HEK293 (cell line): ENCODE measurements at regions of chr3 and their contacts with region 1.

Region 1: DNA sequence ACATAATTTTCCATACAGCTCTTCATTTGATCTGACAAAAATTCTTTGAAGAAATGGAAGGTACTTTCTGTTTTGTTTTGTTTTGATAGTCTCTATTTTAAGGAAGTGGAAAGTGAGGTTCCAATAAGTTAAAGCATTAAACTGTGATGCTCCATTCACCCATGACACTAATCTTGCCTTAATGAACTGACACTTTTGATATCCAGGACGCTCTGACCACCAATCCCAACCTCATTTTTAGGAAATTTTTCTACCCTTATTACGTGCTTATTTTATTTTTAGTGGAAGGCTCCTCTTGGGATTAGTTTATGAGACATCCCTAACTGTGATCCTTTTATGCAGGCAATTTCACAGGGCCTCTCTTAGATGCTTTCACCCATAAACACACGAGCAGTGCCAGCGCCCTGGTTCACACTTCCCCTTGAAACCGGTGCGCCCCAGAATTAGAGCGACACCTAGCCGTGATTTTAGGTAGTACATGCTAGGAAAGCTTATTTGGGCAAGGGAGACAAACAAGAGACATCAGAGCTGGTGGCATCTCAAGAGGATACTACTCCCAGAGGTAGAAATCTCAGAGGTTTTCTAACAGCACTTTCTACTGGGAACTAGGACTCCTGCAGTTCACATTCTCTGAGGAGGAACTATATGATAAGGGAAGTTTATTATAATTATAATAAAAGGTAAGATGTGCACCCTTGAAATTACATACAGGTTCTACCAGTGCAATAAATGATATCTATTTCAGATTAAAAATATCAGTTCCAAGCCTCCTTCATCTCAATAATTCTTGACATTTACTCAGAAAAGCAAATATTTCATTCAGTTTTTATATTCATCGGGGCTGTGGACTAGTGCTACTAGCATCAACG is 173.9 kb downstream of the SLC9A9 start:
- H3K4me3 ChIP-seq: no peak overlapping the region
- H3K27ac ChIP-seq: no peak overlapping the region
- H3K4me1 ChIP-seq: no peaks in the 10 kb centered on the region
- CTCF ChIP-seq: peak; percentile 59

Region 2: GRCh38 chr3:143329567-143330211 is 344.6 kb before region 1 on chr3:
- CTCF ChIA-PET with region 1: no interaction called
- POLR2A ChIA-PET with region 1: no interaction called
- H3K4me3 ChIP-seq: no peak overlapping the region
- H3K27ac ChIP-seq: no peak overlapping the region
- H3K4me1 ChIP-seq: no peaks in the 10 kb centered on the region
- CTCF ChIP-seq: no peak

Region 3: GRCh38 chr3:143661677-143662076 is 12.7 kb before region 1 on chr3:
- CTCF ChIA-PET with region 1: interaction called, 11 read pairs
- POLR2A ChIA-PET with region 1: no interaction called
- H3K4me3 ChIP-seq: no peak overlapping the region
- H3K27ac ChIP-seq: no peak overlapping the region
- H3K4me1 ChIP-seq: no peaks in the 10 kb centered on the region
- CTCF ChIP-seq: no peak

Region 4: DNA sequence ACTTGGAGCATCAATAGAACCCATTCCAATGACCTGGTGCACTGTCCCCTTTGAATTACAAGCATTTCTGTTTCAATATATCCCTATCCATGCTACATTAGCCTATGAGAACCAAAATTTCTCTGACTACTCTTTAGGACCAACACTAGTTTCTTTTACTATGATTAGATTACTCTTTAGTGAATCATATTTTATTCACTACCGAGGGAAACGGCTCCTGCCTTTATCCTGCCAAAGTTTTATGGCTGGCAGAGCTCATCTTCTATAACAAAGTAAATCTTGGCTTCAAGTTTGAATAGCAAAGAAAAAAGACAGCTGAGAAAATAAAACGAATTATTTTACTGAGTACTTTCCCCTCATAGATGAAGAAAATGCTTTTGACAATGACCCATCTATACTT is 53.1 kb after region 1 on chr3:
- CTCF ChIA-PET with region 1: no interaction called
- POLR2A ChIA-PET with region 1: no interaction called
- H3K4me3 ChIP-seq: no peak overlapping the region
- H3K27ac ChIP-seq: no peak overlapping the region
- H3K4me1 ChIP-seq: no peaks in the 10 kb centered on the region
- CTCF ChIP-seq: no peak

Region 5: GRCh38 chr3:144875211-144875610 is 1200.9 kb after region 1 on chr3:
- CTCF ChIA-PET with region 1: no interaction called
- POLR2A ChIA-PET with region 1: no interaction called
- H3K4me3 ChIP-seq: no peak overlapping the region
- H3K27ac ChIP-seq: no peak overlapping the region
- H3K4me1 ChIP-seq: no peaks in the 10 kb centered on the region
- CTCF ChIP-seq: no peak